ENCODE measurements at regions of chr7 and their contacts with region 1.

Region 1: GRCh38 chr7:150753826-150754603 is 16.8 kb downstream of the GIMAP5 start:
- DNase-seq: no peak
- ATAC-seq: peak; percentile 44
- H3K4me3 ChIP-seq: no peak overlapping the region
- H3K4me1 ChIP-seq: no peaks in the 10 kb centered on the region
- CTCF ChIP-seq: no peak

Region 2: DNA sequence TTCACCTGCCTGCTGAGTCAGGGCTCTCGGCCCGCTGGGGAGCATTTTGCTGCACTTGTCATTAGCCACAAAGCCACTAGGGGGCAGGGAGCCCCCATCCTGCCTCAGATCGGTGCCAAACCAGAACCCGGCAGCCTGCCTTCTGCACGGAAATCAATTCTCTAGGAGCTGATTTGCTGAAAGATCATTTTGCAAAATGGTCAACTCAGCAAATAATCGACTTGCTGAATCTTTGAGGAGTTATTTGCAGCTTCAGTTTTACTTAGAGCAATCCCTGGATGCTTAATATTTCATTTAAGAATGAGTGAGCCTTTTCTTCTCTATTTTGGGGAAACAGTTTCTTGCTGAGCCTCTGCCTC is 305.2 kb before region 1 on chr7:
- intact Hi-C with region 1: loop called in 1 of 2 experiments (anchors 5 kb)
- DNase-seq: peak; percentile 84 to 87 (median 86)
- ATAC-seq: peak; percentile 81
- H3K4me3 ChIP-seq: no peak overlapping the region
- H3K4me1 ChIP-seq: peaks cover 17% of the 10 kb centered on the region
- CTCF ChIP-seq: peak; percentile 89

Region 3: DNA sequence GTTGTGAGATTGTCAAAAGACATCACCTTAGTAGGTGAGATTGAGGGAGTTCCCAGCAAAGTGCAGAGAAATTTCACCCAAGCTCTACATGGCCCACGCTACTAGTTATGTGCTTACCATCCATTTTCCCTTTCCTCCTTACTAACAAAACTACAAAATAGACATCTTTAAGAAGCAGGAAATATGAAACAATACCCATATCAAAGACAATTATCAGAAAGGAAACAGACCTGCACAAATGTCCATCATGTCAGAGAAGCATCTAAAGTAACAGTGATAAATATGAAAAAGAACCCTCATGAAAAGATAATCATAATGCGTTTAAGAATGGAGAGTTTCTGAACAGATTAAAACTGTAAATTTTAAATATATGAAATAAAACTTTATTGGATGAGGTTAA is 158.7 kb before region 1 on chr7:
- intact Hi-C with region 1: no loop called
- DNase-seq: no peak
- ATAC-seq: no peak
- H3K4me3 ChIP-seq: no peak overlapping the region
- H3K4me1 ChIP-seq: no peaks in the 10 kb centered on the region
- CTCF ChIP-seq: no peak

Measured in mucosa of descending colon (tissue), 3 donors.